ENCODE measurements at regions of chrX and their contacts with region 1.

Region 1: GRCh38 chrX:9341291-9342201 is 123.3 kb upstream of the TBL1X start:
- DNase-seq: peak; percentile 80
- ATAC-seq: peak; percentile 86
- H3K4me3 Mint-ChIP-seq: peak overlapping the region; percentile 48
- H3K27ac Mint-ChIP-seq: peak overlapping the region; percentile 76
- H3K4me1 Mint-ChIP-seq: peaks cover 33% of the 10 kb centered on the region
- H3K27me3 Mint-ChIP-seq: no peaks in the 10 kb centered on the region

Region 2: GRCh38 chrX:8879750-8880149 is 461.8 kb before region 1 on chrX:
- CTCF ChIA-PET with region 1: no interaction called
- POLR2A ChIA-PET with region 1: no interaction called
- intact Hi-C with region 1: no loop called
- DNase-seq: peak; percentile 43
- ATAC-seq: no peak
- H3K4me3 Mint-ChIP-seq: no peak overlapping the region
- H3K27ac Mint-ChIP-seq: no peak overlapping the region
- H3K4me1 Mint-ChIP-seq: no peaks in the 10 kb centered on the region
- H3K27me3 Mint-ChIP-seq: no peaks in the 10 kb centered on the region

Region 3: DNA sequence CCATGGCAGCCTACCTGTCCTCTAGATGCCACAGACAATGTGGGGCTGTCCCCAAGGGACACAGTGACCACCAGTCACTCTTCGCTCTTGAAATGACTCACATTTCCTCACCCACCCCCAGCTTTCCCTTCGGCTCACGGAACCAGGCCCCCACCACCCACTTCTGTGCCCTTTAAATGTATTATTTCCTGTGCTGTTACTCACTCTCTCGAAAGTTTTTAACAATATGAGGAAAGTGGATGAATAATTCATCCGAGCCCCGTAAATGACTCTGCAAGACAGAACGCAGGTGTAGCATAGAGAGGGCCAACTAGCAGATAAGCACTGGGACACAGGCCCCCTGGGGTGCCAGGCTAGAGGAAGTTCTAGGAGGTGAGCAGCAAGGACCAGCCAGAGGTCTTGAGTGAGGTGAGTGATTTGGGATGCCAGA is 56.2 kb before region 1 on chrX:
- CTCF ChIA-PET with region 1: no interaction called
- POLR2A ChIA-PET with region 1: no interaction called
- intact Hi-C with region 1: loop called (anchors 1 to 5 kb)
- DNase-seq: peak; percentile 80
- ATAC-seq: peak; percentile 97
- H3K4me3 Mint-ChIP-seq: peak overlapping the region; percentile 16
- H3K27ac Mint-ChIP-seq: peak overlapping the region; percentile 85
- H3K4me1 Mint-ChIP-seq: peaks cover 17% of the 10 kb centered on the region
- H3K27me3 Mint-ChIP-seq: no peaks in the 10 kb centered on the region

Region 4: GRCh38 chrX:9456250-9457074 is 114.9 kb after region 1 on chrX:
- CTCF ChIA-PET with region 1: interaction called, 3 read pairs
- POLR2A ChIA-PET with region 1: interaction called, 4 read pairs
- intact Hi-C with region 1: loop called in 1 of 2 experiments (anchors 1 kb)
- DNase-seq: peak; percentile 49
- ATAC-seq: peak; percentile 89
- H3K4me3 Mint-ChIP-seq: peak overlapping the region; percentile 39
- H3K27ac Mint-ChIP-seq: peak overlapping the region; percentile 80
- H3K4me1 Mint-ChIP-seq: peaks cover 37% of the 10 kb centered on the region
- H3K27me3 Mint-ChIP-seq: no peaks in the 10 kb centered on the region

Region 5: DNA sequence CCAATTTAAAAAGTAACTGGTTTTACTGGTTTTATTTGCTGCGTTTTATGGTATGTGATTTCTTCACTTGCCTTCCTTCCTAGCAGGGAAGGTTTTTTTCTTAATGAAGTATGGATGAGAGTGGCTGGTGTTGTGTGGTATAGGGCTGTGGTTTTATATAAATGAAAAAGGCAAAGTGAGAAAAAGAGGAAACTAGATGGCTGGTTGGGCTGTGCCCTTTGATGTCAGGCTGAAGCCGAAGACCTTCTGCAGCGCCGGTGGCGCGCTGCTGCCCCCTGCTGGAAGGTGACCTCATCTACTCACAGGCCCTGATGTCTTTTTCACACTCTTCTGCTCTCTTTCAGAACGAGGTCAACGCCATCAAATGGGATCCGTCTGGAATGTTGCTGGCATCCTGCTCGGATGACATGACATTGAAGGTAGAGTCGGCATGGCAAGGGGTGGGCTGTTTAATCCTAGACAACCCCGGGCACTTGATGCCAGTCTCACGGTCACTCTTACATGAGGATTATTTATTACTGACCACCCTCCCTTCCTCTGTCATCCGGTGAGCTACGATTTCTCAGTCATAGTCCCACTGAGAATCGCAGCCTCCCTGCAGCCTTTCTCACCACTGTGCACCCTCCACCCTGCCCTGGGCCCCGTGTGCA is 367.5 kb after region 1 on chrX:
- CTCF ChIA-PET with region 1: no interaction called
- POLR2A ChIA-PET with region 1: no interaction called
- intact Hi-C with region 1: loop called in 1 of 2 experiments (anchors 2 kb)
- DNase-seq: peak; percentile 84
- ATAC-seq: peak; percentile 78
- H3K4me3 Mint-ChIP-seq: no peak overlapping the region
- H3K27ac Mint-ChIP-seq: no peak overlapping the region
- H3K4me1 Mint-ChIP-seq: peaks cover 6% of the 10 kb centered on the region
- H3K27me3 Mint-ChIP-seq: no peaks in the 10 kb centered on the region